ENCODE measurements at regions of chr7 and their contacts with region 1.

Region 1: GRCh38 chr7:80165177-80165576 is 30.5 kb downstream of the GNAI1 start:
- DNase-seq: no peak
- ATAC-seq: no peak
- H3K4me3 ChIP-seq: no peak overlapping the region
- H3K27ac ChIP-seq: no peak overlapping the region
- H3K4me1 ChIP-seq: no peaks in the 10 kb centered on the region
- H3K27me3 ChIP-seq: no peaks in the 10 kb centered on the region
- CTCF ChIP-seq: no peak
- EP300 ChIP-seq: no peak
- POLR2A ChIP-seq: no peak
- RAD21 ChIP-seq: no peak

Region 2: GRCh38 chr7:80204919-80205318 is 39.7 kb after region 1 on chr7:
- CTCF ChIA-PET with region 1: no interaction called
- POLR2A ChIA-PET with region 1: no interaction called
- in situ Hi-C with region 1: no loop called
- intact Hi-C with region 1: loop called (anchors 1 kb)
- DNase-seq: no peak
- ATAC-seq: no peak
- H3K4me3 ChIP-seq: no peak overlapping the region
- H3K27ac ChIP-seq: no peak overlapping the region
- H3K4me1 ChIP-seq: peaks cover 25% of the 10 kb centered on the region
- H3K27me3 ChIP-seq: no peaks in the 10 kb centered on the region
- CTCF ChIP-seq: no peak
- EP300 ChIP-seq: no peak
- POLR2A ChIP-seq: no peak
- RAD21 ChIP-seq: no peak

Measured in HepG2 (cell line).